CD4-positive, alpha-beta T cell (primary cell): ENCODE measurements at regions of chr12 and their contacts with region 1.

Region 1: DNA sequence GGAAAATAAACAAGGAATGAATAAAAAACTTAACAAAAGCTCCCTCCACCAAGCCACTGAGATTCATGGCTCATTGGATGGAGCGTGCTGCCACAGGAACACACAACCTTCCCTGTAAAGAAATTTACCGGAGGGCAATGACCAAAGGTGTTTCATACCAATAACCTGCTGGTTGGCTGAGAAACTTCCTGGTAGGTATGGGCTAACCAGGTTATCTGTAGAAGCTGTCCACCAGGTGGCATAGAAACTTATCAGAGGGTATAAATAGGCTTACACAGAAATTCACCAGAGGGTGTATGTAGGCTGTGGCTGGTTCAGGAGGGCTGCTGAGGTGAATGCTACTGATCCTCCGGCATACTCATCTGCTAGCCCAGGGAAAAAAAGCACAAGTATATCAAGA is 27.1 kb upstream of the MTERF2 start:
- DNase-seq: peak in 4 of 14 experiments; percentile 27 to 70 (median 56)
- ATAC-seq: peak; percentile 91
- H3K4me3 ChIP-seq: no peak overlapping the region
- H3K4me3 Mint-ChIP-seq: no peak overlapping the region
- H3K27ac ChIP-seq: no peak overlapping the region
- H3K27ac Mint-ChIP-seq: no peak overlapping the region
- H3K4me1 ChIP-seq: no peaks in the 10 kb centered on the region
- H3K4me1 Mint-ChIP-seq: no peaks in the 10 kb centered on the region
- H3K27me3 ChIP-seq: no peaks in the 10 kb centered on the region
- H3K27me3 Mint-ChIP-seq: no peaks in the 10 kb centered on the region
- CTCF ChIP-seq: no peak

Region 2: GRCh38 chr12:107066691-107067090 is 52.7 kb after region 1 on chr12:
- CTCF ChIA-PET with region 1: no interaction called
- POLR2A ChIA-PET with region 1: no interaction called
- intact Hi-C with region 1: loop called in 1 of 2 experiments (anchors 5 kb)
- DNase-seq: peak in 1 of 14 experiments; percentile 13
- ATAC-seq: no peak
- H3K4me3 ChIP-seq: no peak overlapping the region
- H3K4me3 Mint-ChIP-seq: no peak overlapping the region
- H3K27ac ChIP-seq: no peak overlapping the region
- H3K27ac Mint-ChIP-seq: no peak overlapping the region
- H3K4me1 ChIP-seq: peaks cover 5% of the 10 kb centered on the region
- H3K4me1 Mint-ChIP-seq: peaks cover 19% of the 10 kb centered on the region
- H3K27me3 ChIP-seq: no peaks in the 10 kb centered on the region
- H3K27me3 Mint-ChIP-seq: no peaks in the 10 kb centered on the region
- CTCF ChIP-seq: no peak

Region 3: GRCh38 chr12:107079172-107080011 is 65.4 kb after region 1 on chr12:
- CTCF ChIA-PET with region 1: no interaction called
- POLR2A ChIA-PET with region 1: no interaction called
- intact Hi-C with region 1: loop called in 1 of 2 experiments (anchors 5 kb)
- DNase-seq: peak in 3 of 14 experiments; percentile 42 to 61 (median 54)
- ATAC-seq: peak; percentile 43
- H3K4me3 ChIP-seq: no peak overlapping the region
- H3K4me3 Mint-ChIP-seq: no peak overlapping the region
- H3K27ac ChIP-seq: no peak overlapping the region
- H3K27ac Mint-ChIP-seq: no peak overlapping the region
- H3K4me1 ChIP-seq: no peaks in the 10 kb centered on the region
- H3K4me1 Mint-ChIP-seq: peaks cover 32% of the 10 kb centered on the region
- H3K27me3 ChIP-seq: no peaks in the 10 kb centered on the region
- H3K27me3 Mint-ChIP-seq: no peaks in the 10 kb centered on the region
- CTCF ChIP-seq: peak; percentile 50

Region 4: DNA sequence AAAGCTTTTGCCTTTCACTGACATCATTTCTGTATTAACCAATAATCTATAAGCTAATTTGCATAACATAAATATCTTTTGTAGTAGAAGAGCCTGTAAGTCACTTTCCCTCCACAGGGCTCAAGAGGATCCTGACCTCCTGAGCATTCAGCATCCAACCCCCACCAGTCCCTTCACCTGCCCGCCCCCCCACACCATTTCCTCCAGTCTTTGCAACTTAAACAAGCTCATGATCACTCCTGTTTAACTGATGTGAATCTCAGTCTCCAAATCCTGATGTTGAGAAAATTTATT is 91.3 kb after region 1 on chr12:
- CTCF ChIA-PET with region 1: interaction called, 12 read pairs
- POLR2A ChIA-PET with region 1: no interaction called
- intact Hi-C with region 1: no loop called
- DNase-seq: no peak
- ATAC-seq: no peak
- H3K4me3 ChIP-seq: no peak overlapping the region
- H3K4me3 Mint-ChIP-seq: no peak overlapping the region
- H3K27ac ChIP-seq: no peak overlapping the region
- H3K27ac Mint-ChIP-seq: no peak overlapping the region
- H3K4me1 ChIP-seq: peaks cover 3% of the 10 kb centered on the region
- H3K4me1 Mint-ChIP-seq: no peaks in the 10 kb centered on the region
- H3K27me3 ChIP-seq: no peaks in the 10 kb centered on the region
- H3K27me3 Mint-ChIP-seq: peaks cover 6% of the 10 kb centered on the region
- CTCF ChIP-seq: no peak